ENCODE measurements at regions of chr5 and their contacts with region 1.

Region 1: GRCh38 chr5:147453875-147454814 is 55.7 kb downstream of the DPYSL3 start:
- DNase-seq: peak in 1 of 2 donors; percentile 93
- H3K4me3 ChIP-seq: peak overlapping the region; percentile 75 to 87
- H3K27ac ChIP-seq: peak overlapping the region; percentile 92 to 96
- H3K4me1 ChIP-seq: peaks cover 0 to 26% of the 10 kb centered on the region in 2 donors
- H3K27me3 ChIP-seq: no peaks in the 10 kb centered on the region
- CTCF ChIP-seq: peak; percentile 90 to 96 (median 96)

Region 2: DNA sequence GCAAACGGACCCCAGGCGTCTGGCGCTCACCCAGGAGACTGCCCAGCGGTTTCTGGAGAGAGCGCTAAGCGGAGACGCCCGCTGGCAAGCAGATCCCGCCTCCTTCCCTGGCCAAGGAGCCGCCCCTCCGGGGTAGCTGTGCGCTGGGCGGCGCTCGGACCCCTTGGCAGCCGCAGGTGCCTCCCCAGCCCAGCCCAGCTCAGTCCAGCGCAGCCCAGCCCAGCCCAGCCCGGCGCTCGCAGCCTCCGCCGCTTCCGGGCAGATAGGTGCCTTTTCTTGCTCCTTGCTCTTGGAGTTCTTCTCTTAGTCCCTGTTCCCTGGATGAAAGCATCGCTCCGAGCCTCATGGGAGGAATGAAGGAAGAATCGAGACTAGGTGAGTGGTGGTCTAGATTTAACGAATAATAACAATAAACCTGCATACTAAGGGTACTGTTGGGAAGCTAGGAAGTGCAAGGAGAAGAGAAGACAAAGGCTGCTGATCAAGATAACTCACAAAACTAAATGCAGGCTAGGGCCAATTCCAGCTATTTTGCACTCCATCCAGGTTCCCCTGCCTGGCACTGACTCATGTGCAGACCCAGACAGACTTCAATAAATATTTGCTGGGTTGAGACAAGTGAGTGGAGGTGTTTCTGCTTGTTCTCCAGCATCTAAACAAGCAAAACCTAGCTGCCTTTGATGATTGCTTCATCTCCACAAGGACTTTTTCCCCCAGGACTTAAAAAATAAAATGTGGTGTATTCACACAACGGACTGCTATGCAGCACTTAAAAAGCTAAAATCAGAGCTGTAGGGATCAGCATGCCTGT is 219.1 kb before region 1 on chr5 and contains the start of gene STK32A:
- intact Hi-C with region 1: loop called (anchors 5 kb)
- DNase-seq: peak in 1 of 2 donors; percentile 85
- H3K4me3 ChIP-seq: peak within 1 kb of the TSS; percentile 73 to 77
- H3K27ac ChIP-seq: peak within 1 kb of the TSS; percentile 88 to 95
- H3K4me1 ChIP-seq: peaks cover 0 to 11% of the 10 kb centered on the region in 2 donors
- H3K27me3 ChIP-seq: no peaks in the 10 kb centered on the region
- CTCF ChIP-seq: no peak
- total RNA-seq, gene STK32A: 6.2 TPM

Region 3: DNA sequence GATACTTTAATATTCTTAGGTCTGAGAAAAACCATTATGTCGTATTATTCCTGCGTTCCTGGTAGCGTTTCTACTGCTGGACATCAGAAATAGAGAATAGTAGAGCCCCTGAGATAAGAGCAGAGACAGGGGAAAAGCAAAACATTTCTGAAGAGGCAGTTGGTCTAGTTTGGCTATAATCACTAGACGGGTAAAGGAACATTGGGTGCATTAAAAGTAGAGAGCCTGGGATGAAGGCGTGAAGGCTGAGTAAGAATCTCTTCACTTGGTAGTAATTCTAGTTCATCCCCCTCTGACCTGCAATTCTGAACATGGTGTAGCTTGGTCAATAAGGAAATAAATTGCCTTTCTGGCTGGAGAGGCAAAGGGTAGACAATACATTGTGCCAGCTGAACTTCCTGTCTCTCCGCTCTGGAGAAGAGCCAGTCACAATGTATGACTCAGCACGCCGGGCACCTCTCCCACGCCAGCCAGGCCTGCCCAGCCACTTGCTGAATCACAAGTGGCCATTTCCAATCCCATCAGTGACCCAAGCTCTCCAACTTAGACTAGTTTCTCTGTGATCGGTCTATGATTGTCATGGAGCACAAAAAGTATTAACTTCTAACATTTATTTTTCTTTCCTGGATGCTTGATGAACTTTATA is 144.0 kb before region 1 on chr5:
- intact Hi-C with region 1: loop called (anchors 5 kb)
- DNase-seq: peak; percentile 51 to 92
- H3K4me3 ChIP-seq: no peak overlapping the region
- H3K27ac ChIP-seq: peak overlapping the region; percentile 73 to 75
- H3K4me1 ChIP-seq: peaks cover 0 to 16% of the 10 kb centered on the region in 2 donors
- H3K27me3 ChIP-seq: no peaks in the 10 kb centered on the region
- CTCF ChIP-seq: no peak

Region 4: DNA sequence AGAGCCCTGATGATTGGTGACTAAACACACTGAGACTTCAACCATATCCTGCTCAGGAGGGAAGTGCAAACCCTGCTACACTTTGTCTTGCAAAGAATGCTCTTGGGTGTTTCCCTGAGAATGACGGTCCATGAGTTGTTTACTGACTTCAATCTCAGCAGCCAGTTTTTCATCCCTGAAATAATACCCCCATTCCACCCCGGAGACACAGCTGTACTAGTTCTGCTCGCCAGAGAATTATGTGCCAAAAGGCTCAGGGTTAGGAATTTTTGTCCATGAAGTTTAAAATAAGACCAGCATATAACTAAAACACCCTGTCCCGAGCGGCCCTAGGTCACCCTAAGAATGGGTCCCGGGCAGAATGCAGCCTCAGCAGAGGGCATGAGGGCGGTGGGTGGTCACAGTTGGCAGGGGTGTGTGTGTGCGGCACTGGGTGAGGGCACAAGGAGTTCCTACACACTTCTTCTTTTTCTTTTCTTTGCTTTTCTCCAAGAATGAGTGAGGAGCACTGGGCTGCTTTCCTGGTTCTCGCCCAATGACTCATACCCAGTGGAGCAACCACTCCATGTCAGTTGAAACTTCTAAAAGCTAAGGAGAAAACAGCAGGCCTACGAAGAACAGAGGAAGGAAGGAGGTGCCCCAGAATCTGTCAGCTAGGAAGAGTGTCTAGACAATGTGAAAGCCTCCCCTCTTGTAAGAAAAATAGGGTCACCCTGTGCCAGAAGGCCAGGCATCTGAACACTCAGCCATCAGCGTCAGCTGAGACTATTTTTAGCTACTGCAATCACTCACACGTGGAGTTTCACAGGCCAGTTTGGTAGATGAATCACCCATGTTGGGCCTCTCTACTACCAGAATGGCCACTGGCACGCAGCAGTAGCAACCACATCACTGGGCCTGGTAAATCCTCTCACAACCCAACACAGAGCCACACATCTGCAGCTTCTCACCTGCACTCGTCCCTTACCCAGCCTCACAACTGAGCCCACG is 50.2 kb before region 1 on chr5:
- intact Hi-C with region 1: loop called (anchors 1 kb)
- DNase-seq: peak; percentile 76 to 94
- H3K4me3 ChIP-seq: peak overlapping the region; percentile 7 to 36
- H3K27ac ChIP-seq: peak overlapping the region; percentile 94 to 98
- H3K4me1 ChIP-seq: peaks cover 22 to 50% of the 10 kb centered on the region in 2 donors
- H3K27me3 ChIP-seq: no peaks in the 10 kb centered on the region
- CTCF ChIP-seq: no peak

Region 5: DNA sequence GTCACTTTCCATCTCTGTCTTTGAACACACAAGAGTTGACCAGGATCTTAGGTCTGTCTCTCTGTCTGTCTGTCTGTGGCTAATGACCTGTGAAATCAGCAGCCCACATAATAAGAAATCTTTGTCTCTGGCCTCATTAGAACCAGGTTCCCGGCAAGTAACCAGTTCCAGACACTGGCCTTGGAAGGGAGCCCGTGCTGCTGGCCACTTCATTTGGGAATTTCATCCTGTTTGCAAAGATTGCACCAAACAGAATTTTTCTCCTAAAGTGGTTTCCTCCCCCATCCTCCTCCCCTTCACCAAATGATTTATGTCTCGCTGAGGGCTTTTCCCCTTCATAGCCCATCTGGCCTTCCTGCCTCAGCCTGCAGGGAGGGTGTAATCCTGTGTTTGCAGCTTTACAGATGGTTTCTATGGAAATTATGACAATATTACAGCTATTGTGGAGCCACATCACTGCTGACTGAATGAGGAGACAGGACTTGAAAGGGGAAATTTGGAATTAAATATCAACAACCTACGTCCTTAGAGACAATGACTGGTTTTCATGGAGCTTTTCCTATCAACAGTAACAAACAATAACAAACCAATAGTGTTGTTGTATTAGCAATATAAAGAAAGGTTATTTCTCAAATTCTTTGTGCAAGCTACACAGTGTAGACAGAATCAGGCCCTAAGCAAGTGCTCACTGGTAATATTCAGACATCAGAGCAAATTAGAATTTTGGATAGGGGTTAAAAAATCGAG is 30.0 kb after region 1 on chr5:
- intact Hi-C with region 1: loop called (anchors 2 kb)
- DNase-seq: peak in 1 of 2 donors; percentile 85
- H3K4me3 ChIP-seq: no peak overlapping the region
- H3K27ac ChIP-seq: peak overlapping the region; percentile 64 to 82
- H3K4me1 ChIP-seq: peaks cover 10 to 46% of the 10 kb centered on the region in 2 donors
- H3K27me3 ChIP-seq: no peaks in the 10 kb centered on the region
- CTCF ChIP-seq: no peak

Region 6: DNA sequence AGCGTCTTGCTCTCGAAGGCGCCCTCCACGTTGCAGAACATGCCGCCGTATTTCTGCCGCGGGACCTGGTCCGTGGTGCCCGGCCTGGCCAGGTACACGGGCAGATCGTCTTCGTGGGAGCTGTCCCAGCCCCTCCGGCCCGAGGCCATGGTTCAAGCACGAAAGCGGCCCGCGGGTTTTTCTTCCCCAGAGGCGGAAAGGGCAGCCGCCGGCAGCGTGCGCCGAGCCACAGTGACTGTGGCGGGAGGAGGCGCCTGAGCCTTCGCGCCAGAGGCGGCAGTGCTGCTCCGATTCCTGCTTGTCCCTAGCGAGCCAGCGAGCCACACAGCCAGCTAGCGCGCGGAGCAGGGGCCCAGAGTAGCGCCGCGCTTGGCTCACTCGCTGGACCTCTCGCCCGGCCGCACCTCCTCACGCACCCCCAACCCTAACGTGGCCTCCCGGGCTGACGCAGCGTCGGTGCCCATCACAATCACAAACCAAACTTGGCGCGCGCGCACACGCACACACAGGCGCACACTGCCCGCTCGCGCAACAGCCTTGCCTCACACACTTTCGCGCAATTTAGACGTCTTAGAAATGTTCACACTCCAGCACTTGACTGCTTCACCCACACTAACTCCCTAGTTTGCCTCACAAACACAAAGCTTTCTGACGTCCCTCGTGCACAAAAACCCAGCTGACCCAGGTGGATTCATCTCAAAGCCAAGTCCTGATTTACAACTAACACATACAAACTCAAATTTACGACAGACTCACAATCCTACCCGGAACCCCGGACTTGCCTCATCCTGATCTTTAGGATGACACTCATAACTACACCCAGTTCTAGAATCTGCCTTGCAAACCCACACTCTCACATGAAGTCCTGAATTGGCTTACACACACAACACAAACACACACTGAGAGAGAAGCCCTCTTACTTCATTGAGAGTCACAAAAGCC is 55.8 kb after region 1 on chr5 and contains the start of gene DPYSL3:
- intact Hi-C with region 1: loop called (anchors 1 kb)
- DNase-seq: peak; percentile 22 to 88
- H3K4me3 ChIP-seq: peak within 1 kb of the TSS; percentile 65 to 70
- H3K27ac ChIP-seq: peak within 1 kb of the TSS; percentile 81 to 83
- H3K4me1 ChIP-seq: peaks cover 0 to 2% of the 10 kb centered on the region in 2 donors
- H3K27me3 ChIP-seq: no peaks in the 10 kb centered on the region
- CTCF ChIP-seq: peak in 2 of 3 experiments; percentile 47 to 60
- total RNA-seq, gene DPYSL3: 110 TPM

Region 7: DNA sequence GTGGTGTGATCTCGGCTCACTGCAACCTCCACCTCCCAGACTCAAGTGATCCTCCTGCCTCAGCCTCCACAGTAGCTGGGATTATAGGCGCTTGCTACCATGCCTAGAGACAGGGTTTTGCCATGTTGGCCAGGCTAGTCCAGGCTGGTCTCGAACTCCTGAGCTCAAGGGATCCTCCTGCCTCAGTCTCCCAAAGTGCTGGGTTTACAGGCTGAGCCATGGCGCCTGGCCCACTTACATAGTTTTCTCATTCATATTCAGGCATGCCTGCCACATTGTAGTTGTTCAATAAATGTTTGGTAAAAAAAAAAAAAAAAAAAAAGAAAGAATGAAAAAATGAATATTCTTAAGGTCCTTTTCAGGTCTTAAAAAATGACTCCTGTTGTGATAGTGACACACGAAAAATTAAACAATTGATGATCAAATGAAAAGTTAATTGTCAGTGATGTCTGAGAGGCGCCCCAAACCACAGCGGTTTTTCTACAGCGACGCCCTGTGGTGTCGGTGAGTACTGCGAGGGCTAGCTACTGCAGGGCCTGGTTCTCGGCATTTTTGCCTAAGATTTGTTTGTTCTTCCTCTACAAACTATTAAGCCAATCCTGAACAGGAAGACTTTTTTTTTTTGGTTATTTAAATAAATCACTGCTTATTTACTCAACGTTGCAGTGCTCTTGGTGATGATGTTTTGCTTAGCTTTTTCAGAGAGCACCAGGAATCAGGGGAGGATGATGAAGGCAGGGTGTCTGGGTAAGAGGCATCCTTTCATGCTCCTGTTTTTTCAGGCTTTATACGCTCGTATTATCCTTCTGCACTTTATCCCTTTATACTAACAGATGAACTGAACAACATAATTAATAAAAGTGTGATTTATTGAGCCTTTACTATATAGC is 122.7 kb after region 1 on chr5:
- intact Hi-C with region 1: loop called (anchors 1 kb)
- DNase-seq: no peak
- H3K4me3 ChIP-seq: no peak overlapping the region
- H3K27ac ChIP-seq: no peak overlapping the region
- H3K4me1 ChIP-seq: peaks cover 0 to 4% of the 10 kb centered on the region in 2 donors
- H3K27me3 ChIP-seq: no peaks in the 10 kb centered on the region
- CTCF ChIP-seq: peak; percentile 78 to 88 (median 80)